ENCODE measurements at regions of chr14 and their contacts with region 1.

Region 1: GRCh38 chr14:106372870-106373652 is 846.7 kb downstream of the TMEM121 start:
- DNase-seq: peak; percentile 70
- H3K4me3 Mint-ChIP-seq: peak overlapping the region; percentile 60
- H3K27ac Mint-ChIP-seq: no peak overlapping the region
- H3K4me1 Mint-ChIP-seq: peaks cover 17% of the 10 kb centered on the region
- H3K27me3 Mint-ChIP-seq: peaks cover 28% of the 10 kb centered on the region

Region 2: DNA sequence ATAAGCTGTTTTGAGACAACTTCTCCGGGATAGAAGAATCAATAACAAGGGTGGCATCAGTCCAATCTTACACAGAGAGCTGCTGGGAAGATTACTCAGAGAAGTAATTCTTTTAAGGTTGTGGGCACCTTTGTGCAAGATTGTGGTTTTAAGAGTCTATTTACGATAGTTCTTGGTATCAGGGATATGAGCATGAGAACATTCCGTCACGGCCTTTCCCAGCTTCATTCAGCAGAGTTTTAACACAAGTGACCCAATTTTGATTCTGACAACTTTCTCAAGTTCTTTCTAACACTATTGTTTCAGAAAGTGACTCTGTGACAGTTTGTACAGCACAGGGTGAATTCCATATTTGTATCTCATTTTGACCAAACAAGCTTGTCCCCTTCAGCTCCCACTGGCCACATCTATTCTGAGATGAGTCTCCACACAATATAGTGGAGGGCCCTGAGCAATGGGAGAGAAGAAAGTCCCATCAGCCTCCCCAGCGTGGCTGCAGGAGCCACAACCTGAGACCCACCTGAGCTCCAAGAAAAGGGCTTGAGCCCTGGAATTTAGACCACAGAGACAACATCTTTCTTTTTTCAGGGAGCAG is 22.5 kb after region 1 on chr14:
- intact Hi-C with region 1: loop called (anchors 2 kb)
- DNase-seq: no peak
- H3K4me3 Mint-ChIP-seq: peak overlapping the region; percentile 50
- H3K27ac Mint-ChIP-seq: peak overlapping the region; percentile 88
- H3K4me1 Mint-ChIP-seq: peaks cover 21% of the 10 kb centered on the region
- H3K27me3 Mint-ChIP-seq: peaks cover 15% of the 10 kb centered on the region

Measured in activated T-helper 2 cell treated with anti-CD3 and anti-CD28 coated beads, Interferon-gamma antibody, Interleukin-2, Interleukin-4, amounts not matched to agents 10 μg/mL and 5 μg/mL and 100 μg/mL, durations not matched to agents 14 hours and 24 hours and 36 hours (primary cell).